ENCODE measurements at regions of chr17 and their contacts with region 1.

Region 1: GRCh38 chr17:7035591-7036368 is at the start of gene SLC16A13:
- DNase-seq: peak; percentile 99 to 100
- ATAC-seq: peak; percentile 93 to 97
- H3K4me3 ChIP-seq: peak within 1 kb of the TSS; percentile 85
- H3K27ac ChIP-seq: peak within 1 kb of the TSS; percentile 86 to 97
- H3K4me1 ChIP-seq: peaks cover 13% of the 10 kb centered on the region; the same call in 2 of the 3 replicates
- CTCF ChIP-seq: no peak
- EP300 ChIP-seq: no peak
- POLR2A ChIP-seq: peak; percentile 96
- RAD21 ChIP-seq: no peak
- polyA plus RNA-seq, gene SLC16A13: 6.2 and 8.0 TPM in 2 replicates

Region 2: DNA sequence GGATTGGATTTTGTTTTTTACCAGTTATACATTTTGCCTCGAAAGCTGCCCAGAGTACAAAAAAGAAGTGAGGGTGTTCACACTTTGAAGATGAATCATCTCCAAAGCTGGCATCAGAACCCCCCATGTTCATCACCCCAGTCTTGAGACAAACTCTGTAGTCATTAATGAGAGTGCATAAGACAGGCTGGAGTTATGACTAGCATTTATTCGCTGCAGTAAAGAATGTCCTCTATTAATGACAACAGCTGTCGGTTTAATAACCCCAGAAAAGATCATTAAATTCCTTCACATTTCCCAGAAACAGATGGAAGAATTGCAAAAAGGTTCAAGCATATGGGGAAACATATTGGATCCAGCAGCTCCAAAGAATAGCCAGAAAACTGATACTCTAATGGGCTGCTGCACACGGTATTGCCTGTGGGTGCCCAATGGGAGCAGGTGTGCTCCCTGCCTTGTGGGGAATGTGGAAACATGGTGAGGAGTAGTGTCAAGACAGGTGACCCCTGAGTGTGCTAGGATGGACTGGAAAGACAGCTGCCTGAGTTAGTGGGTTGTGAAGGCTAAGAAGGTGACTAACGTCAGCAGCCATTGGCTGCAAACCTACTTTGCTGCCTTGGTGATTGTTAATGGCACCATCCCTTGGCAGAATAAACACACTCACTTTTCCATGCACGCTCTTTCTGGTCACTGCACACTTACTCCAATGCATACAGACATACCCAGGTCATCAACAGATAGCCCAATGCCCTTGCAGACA is 682.8 kb before region 1 on chr17:
- CTCF ChIA-PET with region 1: no interaction called
- POLR2A ChIA-PET with region 1: no interaction called
- DNase-seq: no peak
- ATAC-seq: no peak
- H3K4me3 ChIP-seq: no peak overlapping the region
- H3K27ac ChIP-seq: no peak overlapping the region
- H3K4me1 ChIP-seq: no peaks in the 10 kb centered on the region
- CTCF ChIP-seq: no peak
- EP300 ChIP-seq: no peak
- POLR2A ChIP-seq: no peak
- RAD21 ChIP-seq: no peak

Region 3: DNA sequence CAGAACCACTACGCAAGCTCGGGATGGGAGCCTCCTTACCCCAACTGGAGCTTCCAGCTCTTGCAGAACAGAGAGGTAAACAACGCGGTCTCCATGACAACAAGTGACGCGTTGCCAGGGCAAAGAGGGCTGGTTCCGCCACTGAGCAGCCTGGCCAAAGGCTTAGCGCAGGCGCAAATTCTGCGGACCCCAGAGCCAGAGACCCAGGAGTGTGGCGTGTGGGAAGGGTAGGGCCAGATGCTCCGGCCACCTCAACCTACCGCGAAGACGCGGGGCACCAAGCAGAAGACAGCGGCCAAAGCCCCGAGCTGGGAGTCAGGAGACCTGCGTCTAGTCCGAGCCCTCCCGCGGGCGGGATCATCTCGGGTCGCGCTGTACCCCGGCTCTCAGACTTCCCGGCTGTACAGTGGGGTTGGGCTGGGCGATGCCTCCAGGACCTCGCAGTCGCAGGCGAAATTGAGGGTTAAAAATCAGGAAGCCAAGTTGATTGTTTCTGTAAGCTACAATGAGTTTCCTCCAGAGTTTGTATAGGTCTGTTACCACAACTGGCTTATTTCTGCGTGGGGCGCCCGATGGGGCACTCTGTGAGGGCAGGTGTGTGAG is 204.0 kb before region 1 on chr17 and contains the start of gene TEKT1:
- CTCF ChIA-PET with region 1: no interaction called
- POLR2A ChIA-PET with region 1: no interaction called
- DNase-seq: peak; percentile 81 to 86
- ATAC-seq: peak; percentile 93 to 95
- H3K4me3 ChIP-seq: peak within 1 kb of the TSS; percentile 47
- H3K27ac ChIP-seq: peak within 1 kb of the TSS in 1 of 2 experiments; percentile 50; a peak in 2 of 6 replicates
- H3K4me1 ChIP-seq: peaks cover 11% of the 10 kb centered on the region; the same call in 2 of the 3 replicates
- CTCF ChIP-seq: no peak
- EP300 ChIP-seq: no peak
- POLR2A ChIP-seq: no peak
- RAD21 ChIP-seq: no peak
- polyA plus RNA-seq, gene TEKT1: not detected in 2 replicates

Region 4: GRCh38 chr17:7060165-7060891 is 24.5 kb after region 1 on chr17:
- CTCF ChIA-PET with region 1: interaction called, 132 read pairs
- POLR2A ChIA-PET with region 1: interaction called, 7 read pairs
- DNase-seq: peak; percentile 96 to 98
- ATAC-seq: peak; percentile 90 to 96
- H3K4me3 ChIP-seq: no peak overlapping the region
- H3K27ac ChIP-seq: peak overlapping the region; percentile 79 to 91
- H3K4me1 ChIP-seq: peaks cover 51% of the 10 kb centered on the region
- CTCF ChIP-seq: no peak
- EP300 ChIP-seq: peak; percentile 53 to 70; a peak in 2 of 5 replicates
- POLR2A ChIP-seq: no peak
- RAD21 ChIP-seq: peak; percentile 7 to 29; a peak in 2 of 5 replicates

Region 5: GRCh38 chr17:7072406-7072805 is 36.6 kb after region 1 on chr17:
- CTCF ChIA-PET with region 1: no interaction called
- POLR2A ChIA-PET with region 1: no interaction called
- DNase-seq: no peak
- ATAC-seq: no peak
- H3K4me3 ChIP-seq: no peak overlapping the region
- H3K27ac ChIP-seq: no peak overlapping the region
- H3K4me1 ChIP-seq: no peaks in the 10 kb centered on the region
- CTCF ChIP-seq: no peak
- EP300 ChIP-seq: no peak
- POLR2A ChIP-seq: no peak
- RAD21 ChIP-seq: no peak